Sigmoid colon (tissue), 7 donors: ENCODE measurements at regions of chr10 and their contacts with region 1.

Region 1: GRCh38 chr10:86399879-86400704 is 33.5 kb upstream of the GRID1 start:
- DNase-seq: peak; percentile 97
- H3K4me3 ChIP-seq: peak overlapping the region; percentile 48 to 70 (median 62)
- H3K27ac ChIP-seq: peak overlapping the region; percentile 84 to 97 (median 88)
- H3K4me1 ChIP-seq: peaks cover 0 to 33% (median 28%) of the 10 kb centered on the region in 4 donors
- H3K27me3 ChIP-seq: no peaks in the 10 kb centered on the region
- CTCF ChIP-seq: peak; percentile 86 to 96 (median 88)
- EP300 ChIP-seq: no peak
- POLR2A ChIP-seq: no peak

Region 2: DNA sequence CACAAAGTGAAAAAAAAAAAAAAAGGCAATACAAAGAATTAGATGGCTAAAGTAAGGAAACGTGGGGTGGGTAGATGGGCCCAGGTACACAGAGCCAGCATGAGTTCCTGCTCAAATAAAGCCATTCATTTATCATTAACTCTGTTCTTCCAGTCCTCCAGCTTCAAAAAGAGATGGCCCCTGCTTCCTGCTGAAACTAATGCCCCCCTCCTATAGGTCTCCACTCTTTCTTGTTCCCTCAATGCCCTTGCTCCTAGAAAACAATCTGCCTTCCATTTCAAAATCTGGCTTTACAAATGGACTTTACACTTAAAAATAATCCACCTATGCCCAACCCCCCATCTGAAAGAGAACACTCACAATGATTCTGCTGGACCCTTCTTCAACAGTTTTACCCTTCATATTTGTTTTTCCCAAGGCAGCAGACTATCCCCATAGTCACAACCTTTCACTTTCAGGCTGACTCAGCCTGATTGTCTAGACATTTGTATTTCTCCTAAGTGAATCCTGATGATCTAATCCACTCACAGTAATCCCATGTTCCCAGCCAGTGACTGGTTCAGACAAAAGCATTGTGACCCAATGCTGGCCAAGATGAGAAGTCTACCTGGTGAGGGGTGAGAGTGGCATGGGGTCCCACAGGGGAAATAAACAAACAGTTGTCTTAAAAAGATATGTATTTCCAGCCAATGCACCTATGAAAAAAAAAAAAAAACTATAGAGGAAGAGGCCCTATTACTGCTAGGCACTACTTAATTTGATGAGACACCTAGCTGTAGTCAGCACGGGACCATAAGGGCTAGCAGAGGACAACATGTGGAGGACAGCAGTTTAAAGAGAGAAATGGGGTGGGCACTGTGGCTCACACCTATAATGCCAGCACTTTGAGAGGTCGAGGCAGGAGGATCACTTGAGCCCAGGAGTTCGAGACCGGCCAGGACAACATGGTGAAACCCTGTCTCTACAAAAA is 41.1 kb after region 1 on chr10:
- intact Hi-C with region 1: loop called (anchors 5 kb)
- DNase-seq: no peak
- H3K4me3 ChIP-seq: no peak overlapping the region
- H3K27ac ChIP-seq: no peak overlapping the region
- H3K4me1 ChIP-seq: peaks cover 0 to 17% (median 3%) of the 10 kb centered on the region in 4 donors
- H3K27me3 ChIP-seq: no peaks in the 10 kb centered on the region
- CTCF ChIP-seq: no peak
- EP300 ChIP-seq: no peak
- POLR2A ChIP-seq: no peak

Region 3: DNA sequence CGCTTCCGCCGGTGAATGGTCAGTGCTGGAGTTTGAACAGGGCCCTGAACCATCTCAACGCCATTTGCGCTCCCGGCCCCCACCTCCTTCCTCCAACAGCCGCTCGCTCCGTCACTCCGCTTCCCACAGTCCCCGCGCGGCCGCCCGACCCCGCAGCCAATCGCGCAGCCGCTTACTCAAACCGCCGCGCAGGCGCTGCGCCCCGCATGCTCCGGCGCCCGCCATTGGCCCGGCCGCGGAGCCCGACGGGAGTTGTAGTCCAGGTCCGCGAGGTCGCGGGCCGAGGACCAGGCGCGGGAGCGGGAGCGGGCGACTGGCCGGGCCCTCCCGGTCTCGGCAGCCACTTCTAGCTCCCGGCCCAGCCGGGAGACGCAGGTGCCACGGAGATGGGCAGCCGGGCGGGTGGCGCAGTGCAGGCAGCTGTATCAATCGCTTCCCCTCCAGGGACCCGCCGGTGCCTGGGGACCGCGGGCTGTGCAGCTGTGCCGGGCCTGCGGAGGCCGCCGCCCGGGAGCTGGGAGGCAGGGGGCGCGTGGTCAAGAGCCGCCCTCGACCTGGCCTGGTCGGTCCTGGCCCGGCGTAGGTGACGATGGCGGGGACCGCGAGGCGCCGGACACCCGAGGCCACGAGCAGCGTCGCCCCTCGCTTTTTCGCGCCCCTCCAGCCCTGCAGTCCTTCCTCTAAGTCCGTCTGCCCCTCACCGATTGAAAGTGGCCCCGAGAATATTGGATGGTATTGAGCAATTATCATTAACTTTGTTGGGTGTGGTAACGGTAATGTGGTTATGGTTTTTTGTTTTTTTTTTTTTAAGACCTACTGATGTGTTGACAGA is 121.8 kb after region 1 on chr10 and contains the start of gene WAPL:
- intact Hi-C with region 1: loop called (anchors 5 kb)
- DNase-seq: peak; percentile 98
- H3K4me3 ChIP-seq: peak within 1 kb of the TSS; percentile 78 to 96 (median 88)
- H3K27ac ChIP-seq: peak within 1 kb of the TSS; percentile 93 to 99 (median 97)
- H3K4me1 ChIP-seq: peaks cover 0 to 60% (median 51%) of the 10 kb centered on the region in 4 donors
- H3K27me3 ChIP-seq: no peaks in the 10 kb centered on the region
- CTCF ChIP-seq: no peak
- EP300 ChIP-seq: no peak
- POLR2A ChIP-seq: peak; percentile 39 to 62
- total RNA-seq, gene WAPL: 33.8 to 44.2 (median 37.0) TPM

Region 4: GRCh38 chr10:86585037-86585725 is 185.1 kb after region 1 on chr10:
- intact Hi-C with region 1: loop called (anchors 1 kb)
- DNase-seq: peak; percentile 82
- H3K4me3 ChIP-seq: no peak overlapping the region
- H3K27ac ChIP-seq: peak overlapping the region in 1 of 4 donors; percentile 30
- H3K4me1 ChIP-seq: peaks cover 0 to 8% (median 5%) of the 10 kb centered on the region in 4 donors
- H3K27me3 ChIP-seq: no peaks in the 10 kb centered on the region
- CTCF ChIP-seq: peak; percentile 81 to 96 (median 94)
- EP300 ChIP-seq: no peak
- POLR2A ChIP-seq: no peak

Region 5: GRCh38 chr10:86632009-86632800 is 232.1 kb after region 1 on chr10:
- intact Hi-C with region 1: no loop called
- DNase-seq: no peak
- H3K4me3 ChIP-seq: peak overlapping the region; percentile 1 to 49 (median 40)
- H3K27ac ChIP-seq: peak overlapping the region in 1 of 4 donors; percentile 57
- H3K4me1 ChIP-seq: peaks cover 0 to 26% (median 14%) of the 10 kb centered on the region in 4 donors
- H3K27me3 ChIP-seq: no peaks in the 10 kb centered on the region
- CTCF ChIP-seq: peak in 3 of 4 experiments; percentile 23 to 35 (median 32)
- EP300 ChIP-seq: no peak
- POLR2A ChIP-seq: no peak

Region 6: GRCh38 chr10:86668297-86669165 is 268.4 kb after region 1 on chr10 and contains the start of gene LDB3:
- intact Hi-C with region 1: loop called (anchors 5 kb)
- DNase-seq: peak; percentile 91
- H3K4me3 ChIP-seq: peak within 1 kb of the TSS; percentile 44 to 60 (median 50)
- H3K27ac ChIP-seq: peak within 1 kb of the TSS; percentile 87 to 96 (median 92)
- H3K4me1 ChIP-seq: peaks cover 0 to 79% (median 57%) of the 10 kb centered on the region in 4 donors
- H3K27me3 ChIP-seq: no peaks in the 10 kb centered on the region
- CTCF ChIP-seq: no peak
- EP300 ChIP-seq: no peak
- POLR2A ChIP-seq: peak; percentile 84 to 92
- total RNA-seq, gene LDB3: 13.2 to 42.1 (median 22.4) TPM

Region 7: GRCh38 chr10:86971232-86971991 is 571.3 kb after region 1 on chr10:
- intact Hi-C with region 1: loop called (anchors 10 kb)
- DNase-seq: peak; percentile 96
- H3K4me3 ChIP-seq: peak overlapping the region; percentile 62 to 75 (median 70)
- H3K27ac ChIP-seq: peak overlapping the region; percentile 94 to 98 (median 96)
- H3K4me1 ChIP-seq: peaks cover 0 to 51% (median 45%) of the 10 kb centered on the region in 4 donors
- H3K27me3 ChIP-seq: no peaks in the 10 kb centered on the region
- CTCF ChIP-seq: peak in 1 of 4 experiments; percentile 29
- EP300 ChIP-seq: peak in 2 of 4 donors; percentile 81 to 91
- POLR2A ChIP-seq: no peak